ENCODE measurements at regions of chr2 and their contacts with region 1.

Region 1: DNA sequence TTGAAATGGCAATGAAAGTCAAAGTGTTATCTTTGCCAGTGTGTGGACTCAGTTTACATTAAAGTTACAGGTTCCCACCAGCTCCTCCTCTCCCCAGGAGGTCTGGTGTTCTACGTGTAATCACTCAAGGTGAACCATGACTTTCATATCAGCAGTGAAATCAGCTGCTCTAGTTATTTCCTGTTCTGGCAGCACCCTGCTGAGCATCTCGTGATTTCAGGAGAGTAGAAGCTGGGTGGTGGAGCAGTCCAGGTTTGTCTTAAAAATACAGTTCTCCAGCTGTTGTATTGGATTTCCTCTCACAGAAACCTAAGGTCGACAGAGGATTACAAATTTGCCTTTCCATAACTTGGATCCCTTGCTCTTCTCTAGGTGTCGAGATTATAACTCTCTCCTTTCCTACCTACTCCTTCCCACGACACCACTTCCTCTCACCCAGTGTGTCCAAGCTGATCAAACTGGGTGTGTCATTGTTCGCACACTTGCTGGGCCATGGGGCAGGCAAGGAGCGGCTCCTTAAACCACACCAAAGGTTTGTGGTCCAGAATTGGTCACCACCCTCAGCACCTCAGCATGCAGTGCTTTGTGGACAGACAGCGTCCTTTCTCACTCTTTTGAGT is 13.0 kb upstream of the ARHGAP25 start:
- DNase-seq: no peak
- ATAC-seq: peak; percentile 65
- H3K4me3 Mint-ChIP-seq: peak overlapping the region; percentile 78
- H3K27ac Mint-ChIP-seq: peak overlapping the region; percentile 89
- H3K4me1 Mint-ChIP-seq: peaks cover 68% of the 10 kb centered on the region
- H3K27me3 Mint-ChIP-seq: no peaks in the 10 kb centered on the region

Region 2: DNA sequence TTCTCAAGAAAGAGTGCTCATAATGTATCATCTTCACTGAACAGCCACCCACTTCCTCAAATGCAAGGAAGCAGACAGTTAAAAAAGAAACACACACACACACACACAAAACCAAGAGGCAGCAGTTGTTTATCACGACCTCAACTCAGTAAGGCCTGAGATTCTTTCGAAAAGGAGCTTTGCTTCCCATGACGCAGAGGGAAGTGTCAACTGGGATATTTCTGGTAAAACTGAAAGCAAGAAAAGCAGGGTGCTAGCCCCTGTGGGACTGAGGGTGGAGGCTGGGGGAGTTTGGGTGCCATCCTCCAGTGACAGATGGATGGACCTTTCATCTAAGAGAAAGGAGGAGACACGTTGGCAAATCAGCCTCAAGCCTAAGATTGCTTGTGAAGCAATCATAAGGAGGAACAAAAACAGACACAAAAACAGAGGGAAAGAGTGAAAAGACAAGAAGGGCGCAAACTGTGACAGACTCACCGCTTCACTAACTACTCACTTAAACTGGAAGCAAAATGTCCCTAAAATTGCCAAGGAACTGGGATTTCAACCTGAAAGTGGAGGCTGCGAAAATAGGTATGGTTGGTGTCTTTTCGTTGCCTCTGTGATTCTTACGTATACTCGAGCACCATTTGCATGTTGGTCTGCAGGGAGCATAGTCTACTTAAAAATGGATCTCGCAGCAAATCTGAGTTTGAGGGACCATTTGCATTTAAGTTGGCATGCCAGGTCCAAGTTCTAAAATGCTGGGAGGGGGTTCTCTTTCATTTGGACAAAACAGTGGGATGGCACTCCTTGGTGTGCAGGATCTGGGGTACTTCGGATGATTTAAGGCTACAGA is 13.3 kb after region 1 on chr2 and contains the start of gene ARHGAP25:
- POLR2A ChIA-PET with region 1: interaction called, 38 read pairs
- DNase-seq: no peak
- ATAC-seq: peak; percentile 61
- H3K4me3 Mint-ChIP-seq: no peak within 1 kb of the TSS
- H3K27ac Mint-ChIP-seq: no peak within 1 kb of the TSS
- H3K4me1 Mint-ChIP-seq: peaks cover 23% of the 10 kb centered on the region
- H3K27me3 Mint-ChIP-seq: no peaks in the 10 kb centered on the region
- total RNA-seq, gene ARHGAP25: 109 to 117 TPM

Region 3: GRCh38 chr2:68796294-68796905 is 74.8 kb after region 1 on chr2:
- POLR2A ChIA-PET with region 1: no interaction called
- DNase-seq: no peak
- ATAC-seq: peak; percentile 70
- H3K4me3 Mint-ChIP-seq: peak overlapping the region; percentile 56
- H3K27ac Mint-ChIP-seq: peak overlapping the region; percentile 88
- H3K4me1 Mint-ChIP-seq: peaks cover 47% of the 10 kb centered on the region
- H3K27me3 Mint-ChIP-seq: no peaks in the 10 kb centered on the region

Region 4: GRCh38 chr2:68828887-68829708 is 107.5 kb after region 1 on chr2:
- POLR2A ChIA-PET with region 1: no interaction called
- DNase-seq: peak; percentile 66
- ATAC-seq: peak; percentile 72
- H3K4me3 Mint-ChIP-seq: peak overlapping the region; percentile 81
- H3K27ac Mint-ChIP-seq: peak overlapping the region; percentile 85
- H3K4me1 Mint-ChIP-seq: peaks cover 50% of the 10 kb centered on the region
- H3K27me3 Mint-ChIP-seq: no peaks in the 10 kb centered on the region

Measured in activated naive CD8-positive, alpha-beta T cell treated with anti-CD3 and anti-CD28 coated beads, Interleukin-2, amount 10 ng/mL, durations not matched to agents 7 days and 5 days (primary cell).